ENCODE measurements at regions of chr3 and their contacts with region 1.

Region 1: DNA sequence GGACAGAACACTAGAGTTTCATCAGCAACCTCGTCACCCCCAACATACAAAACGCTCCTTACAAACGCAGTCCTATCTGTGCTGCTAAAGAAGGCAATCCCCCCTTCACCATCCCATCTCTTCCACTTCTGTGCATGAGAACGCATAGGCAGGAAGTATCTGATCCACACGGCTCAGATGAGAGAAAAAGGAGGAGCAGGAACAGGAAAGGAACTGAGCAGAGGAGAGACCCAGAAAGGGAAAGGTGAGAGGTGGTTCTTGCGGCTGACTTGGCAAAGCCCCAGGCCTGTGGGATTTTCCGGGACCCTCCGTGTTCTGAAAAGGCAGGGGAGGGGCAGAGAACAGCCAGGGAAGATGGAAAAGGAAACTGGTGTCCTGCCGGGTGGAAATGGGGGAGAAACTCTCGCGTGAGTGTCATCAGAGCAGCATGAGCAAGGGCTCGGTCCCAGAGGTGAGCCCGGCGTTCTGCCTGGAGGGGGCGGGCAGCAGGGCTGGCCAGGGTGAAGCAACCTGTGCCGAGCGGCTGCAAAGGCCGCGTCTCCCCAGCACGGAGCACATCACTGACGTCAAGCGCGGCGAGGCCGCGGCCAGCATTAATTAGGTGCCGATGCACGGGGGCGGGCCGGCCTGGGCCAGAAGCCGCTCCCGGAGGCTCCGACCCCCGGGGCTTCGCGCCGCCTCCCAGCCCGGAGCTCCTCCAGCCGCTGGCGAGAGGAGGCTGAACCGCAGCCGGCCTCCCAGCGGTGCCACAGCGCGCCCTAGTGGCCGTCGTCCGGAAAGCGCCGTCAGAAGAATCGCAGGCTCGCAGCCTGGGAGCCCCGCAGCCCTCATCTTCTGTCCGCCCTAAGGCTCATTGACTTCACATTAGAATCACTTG is 35.8 kb downstream of the CPN2 start:
- DNase-seq: peak; percentile 74 to 81 (median 77)
- H3K4me3 ChIP-seq: peak overlapping the region; percentile 61 to 62
- H3K4me3 Mint-ChIP-seq: peak overlapping the region; percentile 64 to 90 (median 83)
- H3K27ac ChIP-seq: no peak overlapping the region
- H3K27ac Mint-ChIP-seq: peak overlapping the region in 6 of 7 donors; percentile 13 to 80 (median 54)
- H3K4me1 ChIP-seq: peaks cover 13% of the 10 kb centered on the region
- H3K4me1 Mint-ChIP-seq: peaks cover 5 to 10% (median 8%) of the 10 kb centered on the region in 4 donors
- H3K27me3 ChIP-seq: no peaks in the 10 kb centered on the region
- H3K27me3 Mint-ChIP-seq: peaks cover 5 to 12% of the 10 kb centered on the region in 2 donors

Region 2: DNA sequence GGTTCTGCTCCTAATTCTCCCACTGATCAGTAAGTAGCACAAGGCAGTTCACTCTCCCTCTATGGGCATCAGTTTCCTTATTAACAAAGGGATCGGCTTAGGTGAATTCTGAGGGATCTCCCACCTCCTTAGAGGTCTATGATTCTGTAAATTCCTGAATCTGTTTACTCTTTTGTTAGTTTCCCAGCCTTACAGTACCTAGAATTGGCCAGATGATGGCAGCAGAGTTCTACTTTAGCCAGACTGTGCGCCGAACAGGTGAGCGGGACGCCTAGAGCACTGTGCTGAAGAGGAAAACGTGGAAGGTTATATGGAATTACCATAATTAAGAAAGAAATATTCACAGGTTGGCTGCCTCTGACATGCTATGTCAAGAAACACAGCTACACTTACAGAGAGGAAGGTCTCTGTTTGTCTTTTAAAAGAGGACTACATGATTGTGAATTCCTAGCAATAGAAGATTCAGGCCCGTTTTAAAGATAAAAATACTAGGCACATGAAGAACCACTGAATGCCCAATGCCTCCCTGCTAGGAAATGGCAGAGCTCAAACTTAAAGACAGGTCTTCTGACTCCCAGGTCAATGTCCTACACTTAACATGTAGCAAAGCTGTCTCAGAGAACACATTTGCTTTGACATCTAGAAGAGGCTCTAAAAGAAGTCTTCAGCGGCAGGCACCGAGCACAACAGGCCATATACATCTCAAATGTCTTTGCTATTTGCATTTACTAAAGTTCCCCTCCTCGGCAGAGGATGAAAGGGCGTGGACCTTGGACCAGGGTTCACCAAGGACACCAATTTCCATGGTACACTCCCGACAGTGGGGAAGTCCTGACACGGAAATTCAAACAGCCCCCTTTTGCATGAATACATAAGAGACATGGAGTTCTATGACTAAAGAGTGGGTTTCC is 1847.8 kb before region 1 on chr3:
- CTCF ChIA-PET with region 1: no interaction called
- POLR2A ChIA-PET with region 1: no interaction called
- intact Hi-C with region 1: loop called (anchors 5 kb)
- DNase-seq: peak in 4 of 5 donors; percentile 26 to 52 (median 33)
- H3K4me3 ChIP-seq: no peak overlapping the region
- H3K4me3 Mint-ChIP-seq: no peak overlapping the region
- H3K27ac ChIP-seq: no peak overlapping the region
- H3K27ac Mint-ChIP-seq: no peak overlapping the region
- H3K4me1 ChIP-seq: no peaks in the 10 kb centered on the region
- H3K4me1 Mint-ChIP-seq: peaks cover 0 to 2% (median under 1%) of the 10 kb centered on the region in 4 donors
- H3K27me3 ChIP-seq: no peaks in the 10 kb centered on the region
- H3K27me3 Mint-ChIP-seq: peaks cover 4 to 11% of the 10 kb centered on the region in 2 donors

Region 3: GRCh38 chr3:192816351-192816750 is 1499.0 kb before region 1 on chr3:
- CTCF ChIA-PET with region 1: interaction called, 3 read pairs
- POLR2A ChIA-PET with region 1: no interaction called
- intact Hi-C with region 1: loop called (anchors 10 kb)
- DNase-seq: peak in 4 of 5 donors; percentile 28 to 45 (median 38)
- H3K4me3 ChIP-seq: no peak overlapping the region
- H3K4me3 Mint-ChIP-seq: peak overlapping the region in 1 of 8 donors; percentile 6
- H3K27ac ChIP-seq: no peak overlapping the region
- H3K27ac Mint-ChIP-seq: peak overlapping the region in 1 of 7 donors; percentile 51
- H3K4me1 ChIP-seq: peaks cover 21% of the 10 kb centered on the region
- H3K4me1 Mint-ChIP-seq: peaks cover 2 to 51% (median 30%) of the 10 kb centered on the region in 4 donors
- H3K27me3 ChIP-seq: no peaks in the 10 kb centered on the region
- H3K27me3 Mint-ChIP-seq: no peaks in the 10 kb centered on the region

Region 4: GRCh38 chr3:193665370-193665989 is 649.8 kb before region 1 on chr3:
- CTCF ChIA-PET with region 1: interaction called, 135 read pairs
- POLR2A ChIA-PET with region 1: interaction called, 9 read pairs
- intact Hi-C with region 1: loop called (anchors 1 kb)
- DNase-seq: peak in 4 of 5 donors; percentile 6 to 26 (median 20)
- H3K4me3 ChIP-seq: no peak overlapping the region
- H3K4me3 Mint-ChIP-seq: no peak overlapping the region
- H3K27ac ChIP-seq: no peak overlapping the region
- H3K27ac Mint-ChIP-seq: no peak overlapping the region
- H3K4me1 ChIP-seq: no peaks in the 10 kb centered on the region
- H3K4me1 Mint-ChIP-seq: peaks cover 0 to 1% (median 0%) of the 10 kb centered on the region in 4 donors
- H3K27me3 ChIP-seq: no peaks in the 10 kb centered on the region
- H3K27me3 Mint-ChIP-seq: no peaks in the 10 kb centered on the region

Region 5: GRCh38 chr3:193780810-193781472 is 534.4 kb before region 1 on chr3:
- CTCF ChIA-PET with region 1: interaction called, 73 read pairs
- POLR2A ChIA-PET with region 1: interaction called, 3 read pairs
- intact Hi-C with region 1: loop called (anchors 1 kb)
- DNase-seq: no peak
- H3K4me3 ChIP-seq: no peak overlapping the region
- H3K4me3 Mint-ChIP-seq: no peak overlapping the region
- H3K27ac ChIP-seq: no peak overlapping the region
- H3K27ac Mint-ChIP-seq: peak overlapping the region in 1 of 7 donors; percentile 42
- H3K4me1 ChIP-seq: no peaks in the 10 kb centered on the region
- H3K4me1 Mint-ChIP-seq: peaks cover 0 to 8% (median 2%) of the 10 kb centered on the region in 4 donors
- H3K27me3 ChIP-seq: no peaks in the 10 kb centered on the region
- H3K27me3 Mint-ChIP-seq: peaks cover 18 to 23% of the 10 kb centered on the region in 2 donors

Region 6: DNA sequence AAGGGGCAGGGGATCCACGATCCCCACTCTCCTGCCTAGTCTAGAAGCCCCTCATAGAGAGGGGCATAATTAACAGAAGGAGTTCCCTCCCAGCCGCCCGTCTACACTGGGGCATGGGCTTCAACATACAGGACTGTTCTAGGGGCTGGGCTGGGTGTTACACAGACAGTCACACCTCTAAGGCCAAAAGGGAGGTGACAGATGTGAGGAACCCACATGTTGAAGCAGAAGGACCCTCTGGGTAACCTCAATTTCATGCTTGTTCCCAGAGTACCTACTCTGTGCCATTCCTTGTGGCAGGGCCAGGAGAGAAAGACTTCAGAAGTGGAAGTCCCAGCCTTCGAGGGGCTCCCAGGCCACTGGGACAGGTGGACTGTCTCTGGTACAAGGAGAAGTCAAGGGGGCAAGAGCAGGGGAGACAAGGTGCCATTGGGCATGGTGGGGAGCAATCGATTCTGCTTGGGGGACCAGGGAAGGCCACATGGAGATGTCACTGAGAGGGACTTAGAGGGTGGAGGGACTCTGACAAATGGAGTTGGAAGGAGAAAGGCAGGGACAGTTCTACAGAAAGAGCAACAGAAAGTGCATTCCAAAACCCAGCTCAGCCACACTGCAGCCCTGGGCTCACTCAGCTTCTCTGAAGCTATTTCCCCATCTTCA is 35.5 kb before region 1 on chr3:
- CTCF ChIA-PET with region 1: no interaction called
- POLR2A ChIA-PET with region 1: no interaction called
- intact Hi-C with region 1: no loop called
- DNase-seq: no peak
- H3K4me3 ChIP-seq: no peak overlapping the region
- H3K4me3 Mint-ChIP-seq: no peak overlapping the region
- H3K27ac ChIP-seq: no peak overlapping the region
- H3K27ac Mint-ChIP-seq: no peak overlapping the region
- H3K4me1 ChIP-seq: no peaks in the 10 kb centered on the region
- H3K4me1 Mint-ChIP-seq: peaks cover 0 to 6% (median 5%) of the 10 kb centered on the region in 4 donors
- H3K27me3 ChIP-seq: no peaks in the 10 kb centered on the region
- H3K27me3 Mint-ChIP-seq: peaks cover 2 to 9% of the 10 kb centered on the region in 2 donors

Measured in CD4-positive, alpha-beta memory T cell (primary cell).